ENCODE measurements at regions of chr11 and their contacts with region 1.

Region 1: GRCh38 chr11:126989942-126990715 is 10.4 kb downstream of the KIRREL3 start:
- DNase-seq: peak; percentile 22
- H3K4me3 Mint-ChIP-seq: no peak overlapping the region
- H3K27ac Mint-ChIP-seq: no peak overlapping the region
- H3K4me1 Mint-ChIP-seq: no peaks in the 10 kb centered on the region
- H3K27me3 Mint-ChIP-seq: peaks cover 2% of the 10 kb centered on the region

Region 2: DNA sequence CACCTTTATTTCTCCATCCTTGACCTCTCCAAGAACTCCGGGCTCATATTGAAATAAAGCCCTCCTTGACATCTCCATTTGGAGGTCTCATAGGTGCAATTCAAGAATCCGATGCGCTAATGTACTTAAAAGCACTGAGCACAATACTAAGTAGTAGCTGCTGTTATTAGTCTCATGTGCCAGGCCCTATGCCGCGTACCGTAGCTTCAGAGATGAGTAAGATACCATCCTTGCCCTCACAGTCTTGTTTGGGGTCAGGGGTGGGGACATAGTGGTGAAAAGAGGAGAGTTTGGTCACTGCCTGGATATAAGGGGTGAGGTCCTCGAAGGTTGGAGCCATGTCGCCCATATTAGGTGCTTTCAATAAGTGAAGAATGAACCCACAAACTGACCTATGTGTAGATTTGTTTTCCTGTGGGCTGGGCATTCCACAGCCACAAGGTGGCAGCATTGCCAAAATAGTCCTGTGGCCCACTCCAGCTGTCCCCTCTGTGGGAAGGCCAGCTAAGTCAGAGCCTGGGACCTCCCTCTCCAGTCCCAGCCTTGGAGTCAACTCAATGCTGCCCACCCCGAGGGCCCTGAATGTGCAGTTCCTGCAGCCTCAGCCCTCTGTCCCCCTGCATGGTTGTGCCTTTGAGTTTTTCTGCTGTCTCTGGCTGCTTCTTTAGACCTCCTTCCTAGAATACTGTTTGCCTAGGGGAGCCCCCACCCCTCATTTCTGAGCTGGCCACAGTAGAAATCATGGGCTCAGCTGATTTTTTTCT is 679.7 kb before region 1 on chr11:
- intact Hi-C with region 1: loop called (anchors 5 kb)
- DNase-seq: peak; percentile 41
- H3K4me3 Mint-ChIP-seq: no peak overlapping the region
- H3K27ac Mint-ChIP-seq: peak overlapping the region; percentile 13
- H3K4me1 Mint-ChIP-seq: peaks cover 39% of the 10 kb centered on the region
- H3K27me3 Mint-ChIP-seq: no peaks in the 10 kb centered on the region

Region 3: DNA sequence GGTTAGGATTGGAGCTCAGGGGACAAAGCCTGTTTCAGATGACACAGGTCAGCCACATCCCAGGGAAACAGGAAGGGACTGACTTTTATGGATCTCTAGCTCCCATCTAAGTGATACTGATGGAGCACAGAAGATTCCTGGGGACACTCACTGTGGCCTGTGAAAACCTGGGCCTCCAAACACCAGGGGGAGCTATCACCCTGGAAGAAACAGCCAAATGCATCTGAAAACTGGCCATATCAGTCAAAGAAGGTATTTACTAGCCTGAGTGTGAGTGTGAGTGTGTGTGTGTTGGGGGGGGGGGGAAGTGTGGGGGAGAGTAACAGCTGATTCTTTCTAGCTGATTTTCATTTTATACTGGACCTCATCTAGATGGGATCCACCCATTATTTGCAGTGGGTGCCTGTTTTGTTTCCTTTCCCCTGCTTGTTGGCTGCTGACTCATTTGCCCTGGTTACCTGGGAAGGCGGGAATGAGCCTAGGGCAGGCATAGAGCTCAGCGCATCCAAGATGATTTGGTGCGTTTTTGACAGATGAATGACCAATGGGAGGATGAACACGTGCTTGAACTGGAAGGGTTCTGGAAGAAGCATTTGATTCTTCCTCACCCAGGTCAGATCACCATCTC is 273.6 kb before region 1 on chr11:
- intact Hi-C with region 1: loop called (anchors 1 kb)
- DNase-seq: no peak
- H3K4me3 Mint-ChIP-seq: no peak overlapping the region
- H3K27ac Mint-ChIP-seq: no peak overlapping the region
- H3K4me1 Mint-ChIP-seq: no peaks in the 10 kb centered on the region
- H3K27me3 Mint-ChIP-seq: peaks cover 2% of the 10 kb centered on the region

Region 4: GRCh38 chr11:126917531-126918204 is 72.5 kb before region 1 on chr11:
- intact Hi-C with region 1: no loop called
- DNase-seq: no peak
- H3K4me3 Mint-ChIP-seq: no peak overlapping the region
- H3K27ac Mint-ChIP-seq: no peak overlapping the region
- H3K4me1 Mint-ChIP-seq: no peaks in the 10 kb centered on the region
- H3K27me3 Mint-ChIP-seq: no peaks in the 10 kb centered on the region

Region 5: DNA sequence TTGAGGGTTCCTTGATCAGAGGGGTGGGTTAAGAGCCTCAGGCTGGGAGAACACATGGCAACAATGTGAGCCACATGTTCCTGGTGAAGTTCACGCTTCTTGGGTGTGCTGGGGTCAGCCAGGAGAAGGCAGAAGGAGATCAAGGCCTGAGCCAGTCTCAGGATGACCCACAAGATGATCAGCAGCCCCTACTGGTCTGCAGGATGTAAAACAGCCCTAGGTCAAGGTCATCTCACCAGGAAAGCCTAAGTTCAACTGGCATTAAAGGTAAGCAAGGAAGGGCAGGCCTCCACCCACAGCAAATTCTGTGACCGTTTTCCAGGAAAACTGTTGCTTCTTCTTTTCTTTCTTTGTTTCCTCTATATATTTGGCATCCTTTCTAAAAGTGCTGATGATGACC is 167.1 kb after region 1 on chr11:
- intact Hi-C with region 1: no loop called
- DNase-seq: no peak
- H3K4me3 Mint-ChIP-seq: no peak overlapping the region
- H3K27ac Mint-ChIP-seq: no peak overlapping the region
- H3K4me1 Mint-ChIP-seq: no peaks in the 10 kb centered on the region
- H3K27me3 Mint-ChIP-seq: no peaks in the 10 kb centered on the region

Measured in activated T-helper 1 cell treated with anti-CD3 and anti-CD28 coated beads, Interleukin-12 subunit alpha, Interleukin-12 subunit beta, Interleukin-2, Interleukin-4 antibody, amounts not matched to agents 30 ng/mL and 10 ng/mL and 1 ng/mL, durations not matched to agents 14 hours and 24 hours and 36 hours (primary cell).